AG04449 (cell line): ENCODE measurements at regions of chr10 and their contacts with region 1.

Region 1: GRCh38 chr10:11757821-11758463 is 15.8 kb downstream of the ECHDC3 start:
- DNase-seq: no peak
- H3K4me3 ChIP-seq: no peak overlapping the region
- CTCF ChIP-seq: peak; percentile 92

Region 2: GRCh38 chr10:11424456-11425297 is 333.3 kb before region 1 on chr10:
- CTCF ChIA-PET with region 1: interaction called, 13 read pairs
- POLR2A ChIA-PET with region 1: no interaction called
- DNase-seq: no peak
- H3K4me3 ChIP-seq: no peak overlapping the region
- CTCF ChIP-seq: peak; percentile 85

Region 3: GRCh38 chr10:11724938-11725776 is 32.8 kb before region 1 on chr10:
- CTCF ChIA-PET with region 1: interaction called, 17 read pairs
- POLR2A ChIA-PET with region 1: no interaction called
- DNase-seq: peak; percentile 34
- H3K4me3 ChIP-seq: peak overlapping the region; percentile 15; the same call in 1 of the 2 replicates
- CTCF ChIP-seq: peak; percentile 70

Region 4: GRCh38 chr10:11746883-11747539 is 10.9 kb before region 1 on chr10:
- CTCF ChIA-PET with region 1: interaction called, 21 read pairs
- POLR2A ChIA-PET with region 1: no interaction called
- DNase-seq: no peak
- H3K4me3 ChIP-seq: no peak overlapping the region
- CTCF ChIP-seq: no peak

Region 5: DNA sequence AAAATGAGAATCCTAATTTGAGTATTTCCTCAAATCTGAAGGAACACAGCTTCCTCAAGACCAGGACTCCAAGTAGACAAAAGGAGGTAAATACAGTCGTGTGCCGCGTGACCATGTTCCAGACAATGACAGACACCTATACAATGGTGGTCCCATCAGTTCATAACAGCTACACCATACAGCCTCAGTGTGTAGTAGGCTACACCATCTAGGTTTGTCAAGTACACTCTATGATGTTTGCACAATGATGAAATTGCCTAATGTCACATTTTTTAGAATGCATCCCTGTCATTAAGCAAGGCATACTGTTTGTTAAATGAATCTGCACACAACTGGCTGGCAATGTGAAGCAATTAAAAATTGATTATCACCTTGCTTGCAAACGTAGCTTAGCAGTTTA is 173.1 kb after region 1 on chr10:
- CTCF ChIA-PET with region 1: no interaction called
- POLR2A ChIA-PET with region 1: no interaction called
- DNase-seq: no peak
- H3K4me3 ChIP-seq: no peak overlapping the region
- CTCF ChIP-seq: no peak

Region 6: DNA sequence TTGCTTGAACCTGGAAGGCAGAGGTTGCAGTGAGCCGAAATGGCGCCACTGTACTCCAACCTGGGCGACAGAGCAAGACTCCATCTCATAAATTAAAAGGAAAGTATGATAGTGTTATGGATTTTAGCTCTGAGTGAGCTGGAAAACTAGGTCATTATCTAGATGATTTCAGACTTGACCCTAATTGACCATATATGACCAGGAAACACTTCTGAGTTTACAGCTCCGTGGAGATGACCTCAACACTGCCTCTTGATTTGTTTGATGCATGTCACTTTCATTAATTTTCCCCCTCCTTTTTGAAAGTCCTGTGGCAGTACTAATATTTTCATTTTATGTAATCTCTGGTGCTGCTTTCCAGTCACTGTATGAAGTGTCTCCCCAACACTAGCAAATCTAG is 363.7 kb after region 1 on chr10:
- CTCF ChIA-PET with region 1: no interaction called
- POLR2A ChIA-PET with region 1: no interaction called
- DNase-seq: no peak
- H3K4me3 ChIP-seq: no peak overlapping the region
- CTCF ChIP-seq: no peak

Region 7: GRCh38 chr10:12156367-12157123 is 398.6 kb after region 1 on chr10:
- CTCF ChIA-PET with region 1: no interaction called
- POLR2A ChIA-PET with region 1: no interaction called
- DNase-seq: no peak
- H3K4me3 ChIP-seq: no peak overlapping the region
- CTCF ChIP-seq: no peak